ENCODE measurements at regions of chr10 and their contacts with region 1.

Region 1: GRCh38 chr10:19638182-19638895 is 177.9 kb upstream of the PLXDC2 start:
- DNase-seq: peak; percentile 95
- ATAC-seq: peak; percentile 95
- H3K4me3 ChIP-seq: peak overlapping the region; percentile 32; the same call in 1 of the 2 replicates
- H3K27ac ChIP-seq: peak overlapping the region; percentile 73; the same call in 1 of the 2 replicates
- H3K4me1 ChIP-seq: peaks cover 5% of the 10 kb centered on the region
- H3K27me3 ChIP-seq: no peaks in the 10 kb centered on the region
- CTCF ChIP-seq: no peak
- POLR2A ChIP-seq: no peak
- RAD21 ChIP-seq: no peak

Region 2: GRCh38 chr10:18486438-18486837 is 1151.9 kb before region 1 on chr10:
- CTCF ChIA-PET with region 1: no interaction called
- POLR2A ChIA-PET with region 1: interaction called, 18 read pairs
- dilution Hi-C with region 1: no loop called
- in situ Hi-C with region 1: no loop called
- intact Hi-C with region 1: no loop called
- DNase-seq: no peak
- ATAC-seq: no peak
- H3K4me3 ChIP-seq: no peak overlapping the region
- H3K27ac ChIP-seq: no peak overlapping the region
- H3K4me1 ChIP-seq: peaks cover 3% of the 10 kb centered on the region
- H3K27me3 ChIP-seq: no peaks in the 10 kb centered on the region
- CTCF ChIP-seq: no peak
- POLR2A ChIP-seq: no peak
- RAD21 ChIP-seq: no peak

Region 3: GRCh38 chr10:18689498-18689897 is 948.8 kb before region 1 on chr10:
- CTCF ChIA-PET with region 1: no interaction called
- POLR2A ChIA-PET with region 1: no interaction called
- dilution Hi-C with region 1: no loop called
- in situ Hi-C with region 1: loop called (anchors 10 kb)
- intact Hi-C with region 1: no loop called
- DNase-seq: peak; percentile 65
- ATAC-seq: peak; percentile 87
- H3K4me3 ChIP-seq: no peak overlapping the region
- H3K27ac ChIP-seq: no peak overlapping the region
- H3K4me1 ChIP-seq: no peaks in the 10 kb centered on the region; the same call in 1 of the 2 replicates
- H3K27me3 ChIP-seq: no peaks in the 10 kb centered on the region
- CTCF ChIP-seq: peak; percentile 70
- POLR2A ChIP-seq: no peak
- RAD21 ChIP-seq: peak; percentile 76

Region 4: DNA sequence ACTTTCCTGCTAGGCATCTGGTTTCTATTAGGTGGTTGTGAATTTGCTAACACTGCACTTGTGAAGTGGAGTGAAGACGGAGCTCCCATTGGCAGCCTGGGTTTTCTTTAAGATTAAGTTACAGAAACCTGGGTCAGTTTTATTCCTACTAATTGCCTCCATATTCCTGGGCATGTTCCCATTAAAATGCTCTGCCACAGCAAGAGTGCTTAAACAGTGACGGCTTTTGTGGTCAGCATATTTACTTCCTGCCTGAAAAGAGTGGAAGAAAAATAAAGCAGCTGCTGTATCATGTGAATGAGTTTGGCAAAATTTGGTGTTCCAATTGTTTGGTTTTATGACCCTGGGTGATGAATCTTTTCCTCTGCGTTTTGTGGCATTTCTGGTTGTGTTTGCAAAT is 80.9 kb after region 1 on chr10:
- CTCF ChIA-PET with region 1: no interaction called
- POLR2A ChIA-PET with region 1: no interaction called
- dilution Hi-C with region 1: no loop called
- in situ Hi-C with region 1: no loop called
- intact Hi-C with region 1: no loop called
- DNase-seq: peak; percentile 87
- ATAC-seq: peak; percentile 93
- H3K4me3 ChIP-seq: no peak overlapping the region
- H3K27ac ChIP-seq: no peak overlapping the region; the same call in 1 of the 2 replicates
- H3K4me1 ChIP-seq: peaks cover 5% of the 10 kb centered on the region
- H3K27me3 ChIP-seq: no peaks in the 10 kb centered on the region
- CTCF ChIP-seq: no peak
- POLR2A ChIP-seq: no peak
- RAD21 ChIP-seq: no peak

Region 5: DNA sequence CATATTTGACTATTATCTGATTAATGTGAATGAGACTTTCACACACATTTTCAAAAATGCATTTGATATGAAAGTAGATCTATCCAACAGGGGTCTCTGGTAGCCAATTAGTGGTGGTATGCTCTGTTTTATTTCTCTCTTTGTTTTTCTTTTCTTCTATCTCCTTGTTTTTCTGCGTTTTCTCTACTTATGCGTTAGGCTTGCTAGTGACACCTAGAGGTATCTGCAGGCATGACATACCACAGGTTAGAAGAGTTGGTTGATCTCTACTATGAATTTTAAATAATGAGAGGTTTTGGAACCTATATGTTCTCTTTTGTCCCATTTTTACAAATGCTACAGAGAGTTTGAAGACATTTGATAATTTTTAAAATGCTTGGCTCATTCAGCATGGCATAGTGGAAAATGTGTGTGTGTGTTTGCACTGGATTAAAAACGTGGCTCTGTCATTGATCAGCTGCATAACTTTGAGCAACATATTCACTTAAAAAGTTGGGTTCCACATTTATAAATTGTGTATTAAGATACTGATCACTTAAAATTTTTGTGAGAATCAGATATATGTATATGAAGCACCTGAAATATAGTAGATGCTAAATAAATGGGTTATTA is 149.8 kb after region 1 on chr10:
- CTCF ChIA-PET with region 1: interaction called, 5 read pairs
- POLR2A ChIA-PET with region 1: no interaction called
- dilution Hi-C with region 1: no loop called
- in situ Hi-C with region 1: loop called (anchors 10 kb)
- intact Hi-C with region 1: no loop called
- DNase-seq: peak; percentile 73
- ATAC-seq: peak; percentile 75; the same call in 1 of the 2 replicates
- H3K4me3 ChIP-seq: no peak overlapping the region
- H3K27ac ChIP-seq: no peak overlapping the region
- H3K4me1 ChIP-seq: no peaks in the 10 kb centered on the region
- H3K27me3 ChIP-seq: no peaks in the 10 kb centered on the region
- CTCF ChIP-seq: peak; percentile 79
- POLR2A ChIP-seq: no peak
- RAD21 ChIP-seq: peak; percentile 73

Region 6: DNA sequence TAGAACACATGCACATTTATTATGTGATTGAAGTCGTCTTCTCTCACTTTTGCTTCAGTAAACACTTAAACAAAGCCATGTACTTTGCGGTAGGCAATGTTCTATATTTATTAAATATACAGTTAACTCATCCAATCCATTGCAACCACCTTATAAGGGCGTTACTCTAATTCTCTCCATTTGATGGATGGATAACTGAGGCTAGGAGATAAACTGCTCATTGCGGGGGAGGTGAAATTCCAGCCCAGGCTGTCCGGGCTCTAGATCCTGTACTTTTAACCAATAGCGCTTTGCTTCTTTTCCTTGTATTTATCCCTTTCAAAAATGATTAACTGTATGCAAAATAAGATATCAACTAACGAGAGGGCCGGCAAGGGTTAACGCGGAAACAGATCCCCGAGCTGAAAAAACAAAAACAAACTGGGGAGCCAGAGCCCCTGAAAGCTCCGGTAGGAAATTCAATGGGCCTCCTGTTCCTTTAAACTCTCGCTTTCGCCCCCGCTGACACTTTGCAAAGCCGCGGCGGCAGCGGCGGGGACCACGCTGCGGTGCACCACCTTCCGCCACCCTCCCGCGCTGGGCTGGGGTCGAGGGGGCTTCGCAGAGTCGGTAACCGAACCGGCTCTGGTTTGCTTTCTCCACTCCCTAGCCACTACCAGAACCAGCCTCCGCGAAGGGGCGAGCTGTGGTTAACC is 176.8 kb after region 1 on chr10:
- CTCF ChIA-PET with region 1: no interaction called
- POLR2A ChIA-PET with region 1: no interaction called
- dilution Hi-C with region 1: no loop called
- in situ Hi-C with region 1: no loop called
- intact Hi-C with region 1: no loop called
- DNase-seq: no peak
- ATAC-seq: peak; percentile 4
- H3K4me3 ChIP-seq: peak overlapping the region; percentile 61
- H3K27ac ChIP-seq: peak overlapping the region; percentile 80
- H3K4me1 ChIP-seq: no peaks in the 10 kb centered on the region
- H3K27me3 ChIP-seq: peaks cover 3% of the 10 kb centered on the region; the same call in 1 of the 2 replicates
- CTCF ChIP-seq: no peak
- POLR2A ChIP-seq: no peak
- RAD21 ChIP-seq: no peak

Region 7: GRCh38 chr10:20004087-20004523 is 365.8 kb after region 1 on chr10:
- CTCF ChIA-PET with region 1: no interaction called
- POLR2A ChIA-PET with region 1: no interaction called
- dilution Hi-C with region 1: no loop called
- in situ Hi-C with region 1: no loop called
- intact Hi-C with region 1: loop called (anchors 10 kb)
- DNase-seq: peak; percentile 45
- ATAC-seq: peak; percentile 31
- H3K4me3 ChIP-seq: no peak overlapping the region
- H3K27ac ChIP-seq: peak overlapping the region; percentile 65; the same call in 1 of the 2 replicates
- H3K4me1 ChIP-seq: peaks cover 6% of the 10 kb centered on the region; the same call in 1 of the 2 replicates
- H3K27me3 ChIP-seq: no peaks in the 10 kb centered on the region
- CTCF ChIP-seq: no peak
- POLR2A ChIP-seq: no peak
- RAD21 ChIP-seq: no peak

Region 8: GRCh38 chr10:20257422-20257821 is 619.1 kb after region 1 on chr10:
- CTCF ChIA-PET with region 1: no interaction called
- POLR2A ChIA-PET with region 1: no interaction called
- dilution Hi-C with region 1: no loop called
- in situ Hi-C with region 1: no loop called
- intact Hi-C with region 1: no loop called
- DNase-seq: no peak
- ATAC-seq: no peak
- H3K4me3 ChIP-seq: no peak overlapping the region
- H3K27ac ChIP-seq: no peak overlapping the region
- H3K4me1 ChIP-seq: no peaks in the 10 kb centered on the region
- H3K27me3 ChIP-seq: no peaks in the 10 kb centered on the region
- CTCF ChIP-seq: no peak
- POLR2A ChIP-seq: no peak
- RAD21 ChIP-seq: no peak

Measured in IMR-90 (cell line).